Calu3 (cell line): ENCODE measurements at regions of chr17 and their contacts with region 1.

Region 1: GRCh38 chr17:59558977-59559376 is 6.4 kb upstream of the DHX40 start:
- DNase-seq: no peak
- H3K4me3 Mint-ChIP-seq: no peak overlapping the region
- H3K27ac Mint-ChIP-seq: no peak overlapping the region
- H3K4me1 Mint-ChIP-seq: no peaks in the 10 kb centered on the region
- H3K27me3 Mint-ChIP-seq: no peaks in the 10 kb centered on the region
- CTCF ChIP-seq: no peak

Region 2: GRCh38 chr17:59311130-59311920 is 247.7 kb before region 1 on chr17:
- CTCF ChIA-PET with region 1: interaction called, 4 read pairs
- intact Hi-C with region 1: loop called (anchors 10 kb)
- DNase-seq: peak; percentile 28
- H3K4me3 Mint-ChIP-seq: no peak overlapping the region
- H3K27ac Mint-ChIP-seq: no peak overlapping the region
- H3K4me1 Mint-ChIP-seq: no peaks in the 10 kb centered on the region
- H3K27me3 Mint-ChIP-seq: no peaks in the 10 kb centered on the region
- CTCF ChIP-seq: no peak

Region 3: DNA sequence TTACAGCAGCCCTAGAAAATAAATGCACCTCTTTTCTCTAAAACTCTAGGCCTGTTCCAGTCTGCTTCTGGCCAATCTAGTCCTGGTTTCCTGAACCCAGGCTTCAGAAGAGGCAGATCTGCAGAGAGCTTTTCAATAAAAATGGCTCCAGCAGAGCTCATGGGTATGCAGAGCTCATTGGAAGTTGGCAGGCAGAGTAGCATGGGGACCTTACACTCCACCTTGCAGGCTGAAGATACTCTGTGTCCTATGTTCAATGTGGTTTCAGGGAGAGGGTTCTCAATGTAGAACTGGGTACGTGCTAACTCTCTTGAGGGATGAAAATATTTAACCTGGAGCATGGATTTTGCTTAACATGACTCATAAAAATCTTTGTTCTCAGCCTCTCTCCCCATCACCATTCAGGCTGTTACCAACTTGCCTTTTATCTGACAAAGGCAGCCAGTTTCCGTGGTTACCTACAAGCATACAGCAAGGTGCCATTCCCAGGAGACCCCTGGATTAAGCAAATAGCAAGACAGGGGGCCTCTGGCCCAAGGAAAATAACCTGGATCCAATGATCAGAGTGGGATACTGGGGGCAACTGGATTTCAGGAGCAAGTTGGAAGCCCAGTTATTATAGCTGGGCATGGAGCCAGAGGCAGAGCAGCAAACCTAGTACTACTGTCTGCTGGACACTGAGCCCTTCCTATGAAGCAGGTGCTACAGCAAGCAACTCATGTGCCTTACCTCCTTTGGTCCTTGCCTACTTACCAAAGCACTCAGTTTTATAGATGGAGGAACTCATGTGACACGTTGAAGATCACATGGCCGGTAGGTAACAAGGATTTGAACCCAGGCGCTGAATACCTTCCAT is 91.8 kb before region 1 on chr17:
- CTCF ChIA-PET with region 1: no interaction called
- intact Hi-C with region 1: loop called (anchors 5 kb)
- DNase-seq: no peak
- H3K4me3 Mint-ChIP-seq: no peak overlapping the region
- H3K27ac Mint-ChIP-seq: no peak overlapping the region
- H3K4me1 Mint-ChIP-seq: no peaks in the 10 kb centered on the region
- H3K27me3 Mint-ChIP-seq: no peaks in the 10 kb centered on the region
- CTCF ChIP-seq: no peak

Region 4: GRCh38 chr17:59534598-59534997 is 24.4 kb before region 1 on chr17:
- CTCF ChIA-PET with region 1: no interaction called
- intact Hi-C with region 1: no loop called
- DNase-seq: no peak
- H3K4me3 Mint-ChIP-seq: no peak overlapping the region
- H3K27ac Mint-ChIP-seq: no peak overlapping the region
- H3K4me1 Mint-ChIP-seq: no peaks in the 10 kb centered on the region
- H3K27me3 Mint-ChIP-seq: peaks cover 26% of the 10 kb centered on the region
- CTCF ChIP-seq: no peak

Region 5: DNA sequence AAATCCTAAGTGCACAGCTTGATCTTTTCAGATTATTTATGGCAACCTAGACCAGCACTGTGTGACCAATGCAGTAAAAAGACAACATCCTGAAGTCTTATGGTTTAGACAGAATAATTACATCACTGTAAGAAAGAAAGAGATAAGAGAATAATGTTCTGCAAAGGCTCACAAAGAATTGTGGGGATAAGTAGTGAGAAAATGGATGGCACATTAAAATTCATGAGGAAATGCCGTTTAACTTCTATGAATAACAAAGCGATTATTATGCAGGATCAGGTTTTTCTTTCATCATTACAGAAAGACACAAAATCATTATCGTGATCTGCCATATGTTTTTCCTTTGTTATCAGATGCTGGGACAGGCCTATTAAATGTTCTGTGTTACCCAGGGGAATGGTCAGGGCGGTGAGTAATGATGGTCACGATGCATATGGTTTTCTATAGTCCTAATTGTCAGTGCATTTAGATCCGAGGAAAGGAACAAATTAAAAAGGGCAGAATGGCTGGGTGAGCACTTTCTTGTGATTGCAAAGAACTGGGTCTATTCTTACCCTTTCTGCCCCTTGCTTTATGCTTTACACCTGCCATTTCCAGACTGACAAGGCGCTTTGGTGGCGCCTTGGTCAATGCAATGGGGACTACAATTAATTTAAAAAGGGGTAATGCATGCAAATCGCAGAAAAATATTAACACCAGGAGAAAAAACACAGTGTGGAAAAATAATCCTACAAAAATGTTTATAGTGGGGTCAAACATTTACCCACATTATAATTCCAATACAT is 11.7 kb before region 1 on chr17:
- CTCF ChIA-PET with region 1: no interaction called
- intact Hi-C with region 1: no loop called
- DNase-seq: no peak
- H3K4me3 Mint-ChIP-seq: no peak overlapping the region
- H3K27ac Mint-ChIP-seq: no peak overlapping the region
- H3K4me1 Mint-ChIP-seq: no peaks in the 10 kb centered on the region
- H3K27me3 Mint-ChIP-seq: no peaks in the 10 kb centered on the region
- CTCF ChIP-seq: no peak